ENCODE measurements at regions of chr10 and their contacts with region 1.

Region 1: DNA sequence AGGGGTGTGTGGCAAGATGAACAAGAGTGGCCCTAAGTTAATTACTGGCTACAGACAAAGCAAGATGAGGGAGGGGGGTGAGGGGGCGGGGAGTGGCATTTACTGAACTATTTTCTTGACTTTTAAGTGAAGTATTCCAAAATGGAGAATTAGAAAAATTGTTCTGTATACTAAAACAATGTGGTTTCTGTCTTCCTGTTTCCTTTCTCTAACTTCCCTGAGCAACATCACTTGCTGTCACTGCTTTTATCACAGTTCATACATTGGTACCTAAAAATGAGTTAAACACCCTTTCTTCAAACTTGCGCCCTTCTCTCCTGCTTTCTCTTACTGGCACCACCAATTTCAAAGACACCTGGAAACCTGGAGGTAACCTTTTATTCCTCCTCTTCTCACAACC is 21.6 kb downstream of the PDZD8 start:
- DNase-seq: no peak
- ATAC-seq: no peak
- H3K4me3 ChIP-seq: no peak overlapping the region
- H3K27ac ChIP-seq: no peak overlapping the region
- H3K4me1 ChIP-seq: peaks cover 0 to 18% of the 10 kb centered on the region in 2 experiments; a peak in 4 of 5 replicates
- H3K27me3 ChIP-seq: no peaks in the 10 kb centered on the region
- CTCF ChIP-seq: no peak
- EP300 ChIP-seq: no peak
- POLR2A ChIP-seq: no peak
- RAD21 ChIP-seq: no peak

Region 2: DNA sequence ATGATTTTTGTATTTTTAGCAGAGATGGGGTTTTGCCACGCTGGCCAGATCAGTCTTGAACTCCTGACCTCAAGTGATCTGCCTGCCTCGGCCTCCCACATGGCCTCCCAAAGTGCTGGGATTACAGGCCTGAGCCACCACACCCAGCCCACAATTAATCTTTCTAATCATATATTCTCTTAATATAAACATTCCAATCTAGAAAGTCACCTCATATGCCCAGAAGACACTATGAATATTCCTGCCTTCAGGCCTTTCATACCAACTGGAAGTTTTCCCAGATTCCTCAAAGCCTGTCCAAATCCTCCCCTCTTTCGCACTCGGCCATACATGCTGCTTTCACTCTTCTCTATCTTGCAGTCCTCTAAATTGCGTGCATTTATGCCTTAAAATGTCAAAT is 11.0 kb before region 1 on chr10:
- CTCF ChIA-PET with region 1: no interaction called
- POLR2A ChIA-PET with region 1: no interaction called
- in situ Hi-C with region 1: no loop called
- intact Hi-C with region 1: no loop called
- DNase-seq: no peak
- ATAC-seq: no peak; the same call in 2 of the 3 replicates
- H3K4me3 ChIP-seq: no peak overlapping the region
- H3K27ac ChIP-seq: no peak overlapping the region
- H3K4me1 ChIP-seq: peaks cover 4 to 12% of the 10 kb centered on the region in 2 experiments; a peak in 4 of 5 replicates
- H3K27me3 ChIP-seq: no peaks in the 10 kb centered on the region
- CTCF ChIP-seq: no peak
- EP300 ChIP-seq: no peak
- POLR2A ChIP-seq: no peak
- RAD21 ChIP-seq: no peak

Region 3: DNA sequence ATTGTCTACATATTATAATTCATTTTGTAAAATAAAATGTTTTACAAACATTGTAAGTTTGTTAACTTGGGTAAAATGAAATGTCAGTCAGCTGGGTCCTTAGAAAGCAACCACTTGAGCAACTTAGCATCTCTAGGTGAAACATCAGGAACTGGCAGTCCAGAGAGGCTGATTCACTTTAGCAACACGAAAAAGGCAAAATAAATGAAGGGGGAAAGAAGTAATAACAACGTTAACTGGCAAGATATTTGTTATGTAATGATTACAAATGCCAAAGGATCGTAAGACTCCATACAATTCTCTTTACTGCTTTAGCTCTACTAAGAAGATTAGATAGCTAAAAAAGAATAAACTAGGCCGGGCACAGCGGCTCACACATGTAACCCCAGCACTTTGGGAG is 16.5 kb after region 1 on chr10:
- CTCF ChIA-PET with region 1: no interaction called
- POLR2A ChIA-PET with region 1: interaction called, 15 read pairs
- in situ Hi-C with region 1: no loop called
- intact Hi-C with region 1: no loop called
- DNase-seq: no peak
- ATAC-seq: no peak
- H3K4me3 ChIP-seq: peak overlapping the region; percentile 92; the same call in 1 of the 2 replicates
- H3K27ac ChIP-seq: no peak overlapping the region; the same call in 2 of the 3 replicates
- H3K4me1 ChIP-seq: peaks cover 16 to 19% of the 10 kb centered on the region in 2 experiments; a peak in 4 of 5 replicates
- H3K27me3 ChIP-seq: no peaks in the 10 kb centered on the region
- CTCF ChIP-seq: no peak
- EP300 ChIP-seq: no peak
- POLR2A ChIP-seq: no peak
- RAD21 ChIP-seq: no peak

Measured in K562 (cell line).